ENCODE measurements at regions of chr3 and their contacts with region 1.

Region 1: DNA sequence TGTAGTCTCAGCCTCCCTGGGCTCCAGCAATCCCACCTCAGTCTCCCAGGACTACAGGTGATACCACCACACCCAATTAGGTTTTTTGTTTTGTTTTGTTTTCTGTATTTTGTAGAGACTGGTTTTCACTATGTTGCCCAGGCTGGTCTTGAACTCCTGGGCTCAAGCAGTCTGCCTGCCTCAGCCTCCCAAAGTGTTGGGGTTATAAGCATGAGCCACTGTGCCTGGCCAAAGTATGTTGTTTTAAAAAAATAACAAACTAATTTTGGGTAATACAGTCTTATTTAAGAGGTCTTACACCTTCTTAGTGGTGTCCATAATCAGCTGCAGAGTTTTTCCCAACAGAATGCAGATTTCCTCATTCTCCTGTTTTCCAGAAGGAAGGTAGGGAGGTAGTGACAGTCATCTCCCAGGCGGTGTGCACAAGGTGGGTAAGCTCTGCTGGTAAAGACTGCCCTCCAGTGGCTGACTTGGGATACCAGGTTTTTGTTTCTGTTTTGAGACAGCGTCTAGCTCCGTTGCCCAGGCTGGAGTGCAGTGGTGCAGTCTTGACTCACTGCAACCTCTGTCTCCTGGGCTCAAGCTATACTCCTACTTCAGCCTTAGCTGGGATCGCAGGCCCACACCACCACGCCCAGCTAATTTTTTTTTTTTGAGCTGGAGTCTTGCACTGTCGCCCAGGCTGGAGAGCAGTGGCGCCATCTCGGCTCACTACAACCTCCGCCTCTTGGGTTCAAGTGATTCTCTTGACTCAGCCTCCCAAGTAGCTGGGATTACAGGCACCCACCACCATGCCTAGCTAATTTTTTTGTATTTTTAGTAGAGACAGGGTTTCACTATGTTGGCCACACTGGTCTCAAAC is 58.4 kb downstream of the MAP6D1 start:
- DNase-seq: peak; percentile 63 to 79 (median 68)
- ATAC-seq: peak; percentile 98
- H3K4me3 ChIP-seq: no peak overlapping the region
- H3K27ac ChIP-seq: no peak overlapping the region
- H3K4me1 ChIP-seq: peaks cover 0 to 4% of the 10 kb centered on the region in 2 experiments; a peak in 2 of 5 replicates
- H3K27me3 ChIP-seq: no peaks in the 10 kb centered on the region
- CTCF ChIP-seq: peak; percentile 83 to 85 (median 84)
- EP300 ChIP-seq: no peak
- POLR2A ChIP-seq: no peak
- RAD21 ChIP-seq: peak; percentile 66 to 94; a peak in 3 of 4 replicates

Region 2: GRCh38 chr3:183148056-183148455 is 618.9 kb before region 1 on chr3:
- CTCF ChIA-PET with region 1: no interaction called
- POLR2A ChIA-PET with region 1: no interaction called
- in situ Hi-C with region 1: loop called (anchors 25 kb)
- intact Hi-C with region 1: no loop called
- DNase-seq: no peak
- ATAC-seq: no peak
- H3K4me3 ChIP-seq: no peak overlapping the region
- H3K27ac ChIP-seq: no peak overlapping the region
- H3K4me1 ChIP-seq: no peaks in the 10 kb centered on the region; a peak in 1 of 5 replicates
- H3K27me3 ChIP-seq: peaks cover 16 to 39% of the 10 kb centered on the region in 2 experiments
- CTCF ChIP-seq: no peak
- EP300 ChIP-seq: no peak
- POLR2A ChIP-seq: no peak
- RAD21 ChIP-seq: no peak

Region 3: DNA sequence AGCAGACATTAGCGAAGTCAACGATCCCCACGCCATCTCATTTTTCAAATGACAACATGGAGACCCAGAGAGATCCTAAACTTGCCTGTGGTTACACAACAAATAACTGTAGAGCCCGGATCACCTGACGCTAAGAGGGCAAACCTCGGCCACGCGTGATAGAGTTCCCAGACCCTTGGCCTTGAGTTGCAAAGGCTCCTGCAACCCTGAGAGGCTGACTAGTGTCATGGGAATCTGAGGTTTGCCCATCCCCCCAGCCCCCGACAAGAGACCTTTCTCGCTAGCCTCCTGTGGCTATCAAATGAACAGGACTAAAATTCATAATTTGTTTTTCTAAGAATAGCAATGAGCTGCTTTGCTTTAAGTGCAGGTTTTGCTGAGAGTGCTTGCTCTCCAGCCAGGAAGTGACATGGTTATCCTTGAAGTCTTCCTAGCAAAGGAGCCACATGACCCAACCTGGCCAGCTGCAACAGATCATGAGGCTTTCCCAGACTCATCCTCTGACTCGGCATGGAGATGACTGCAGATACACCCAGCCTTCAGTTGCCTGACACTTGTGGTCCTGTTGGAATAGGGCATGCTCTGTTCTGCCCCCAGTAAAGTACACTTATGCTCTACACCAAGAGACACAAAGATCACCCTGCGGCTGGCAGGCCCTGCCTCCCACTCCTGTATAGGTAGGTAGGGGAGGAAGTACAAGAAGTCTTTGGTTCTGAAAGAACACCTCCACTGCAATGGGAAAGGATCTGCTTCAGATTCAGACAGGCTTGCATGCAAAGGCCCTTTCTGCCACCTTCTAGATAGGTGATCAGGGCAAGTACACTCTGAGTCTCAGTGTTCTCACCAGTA is 374.6 kb before region 1 on chr3:
- CTCF ChIA-PET with region 1: no interaction called
- POLR2A ChIA-PET with region 1: no interaction called
- in situ Hi-C with region 1: no loop called
- intact Hi-C with region 1: loop called (anchors 5 kb)
- DNase-seq: no peak
- ATAC-seq: peak; percentile 46; the same call in 2 of the 3 replicates
- H3K4me3 ChIP-seq: no peak overlapping the region
- H3K27ac ChIP-seq: no peak overlapping the region
- H3K4me1 ChIP-seq: peaks cover 0 to 14% of the 10 kb centered on the region in 2 experiments; a peak in 2 of 5 replicates
- H3K27me3 ChIP-seq: no peaks in the 10 kb centered on the region
- CTCF ChIP-seq: no peak
- EP300 ChIP-seq: no peak
- POLR2A ChIP-seq: no peak
- RAD21 ChIP-seq: no peak

Region 4: DNA sequence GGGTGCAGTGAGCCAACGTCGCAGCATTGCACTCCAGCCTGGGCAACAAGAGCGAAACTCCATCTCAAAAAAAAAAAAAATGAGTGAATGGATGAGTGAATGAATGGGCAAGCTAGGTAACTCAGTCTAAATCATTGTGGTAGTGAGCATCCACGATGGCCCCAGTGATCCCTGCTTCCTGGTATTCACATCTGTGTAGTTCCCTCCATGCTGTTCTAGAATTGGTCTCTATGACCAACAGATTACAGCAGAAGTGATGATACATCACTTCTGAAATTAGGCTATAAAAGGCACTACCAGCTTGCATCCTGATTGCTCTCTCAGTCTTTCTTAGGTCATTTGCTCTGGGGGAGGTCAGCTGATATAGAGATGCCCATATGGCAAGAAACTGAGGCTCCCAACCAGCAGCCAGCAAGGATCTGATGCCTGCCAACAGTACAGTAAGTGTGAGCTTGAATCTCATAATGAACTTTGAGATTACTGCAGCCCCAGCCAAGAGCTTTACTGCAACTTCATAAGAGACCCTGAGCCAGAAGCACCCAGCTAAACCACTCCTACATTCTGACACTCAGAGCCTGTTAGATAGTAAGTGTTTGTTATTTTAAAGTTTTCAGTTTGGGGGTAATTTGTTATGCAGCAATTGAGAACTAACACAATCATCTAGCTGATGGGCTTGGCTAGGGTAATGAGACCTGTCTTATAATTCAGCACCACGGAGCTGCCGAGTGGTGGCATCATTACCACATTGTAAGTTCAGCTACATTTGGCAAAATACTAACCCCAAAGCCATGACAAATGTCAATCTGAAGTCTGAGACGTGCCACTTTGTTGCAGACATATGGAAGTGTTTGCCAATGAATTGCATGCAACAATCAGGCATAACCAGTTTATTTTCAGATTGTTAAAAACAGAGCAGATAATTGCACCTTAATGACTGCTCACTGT is 264.5 kb before region 1 on chr3:
- CTCF ChIA-PET with region 1: interaction called, 8 read pairs
- POLR2A ChIA-PET with region 1: no interaction called
- in situ Hi-C with region 1: no loop called
- intact Hi-C with region 1: loop called (anchors 2 kb)
- DNase-seq: no peak
- ATAC-seq: peak; percentile 54
- H3K4me3 ChIP-seq: no peak overlapping the region
- H3K27ac ChIP-seq: no peak overlapping the region
- H3K4me1 ChIP-seq: peaks cover 0 to 8% of the 10 kb centered on the region in 2 experiments; a peak in 3 of 5 replicates
- H3K27me3 ChIP-seq: no peaks in the 10 kb centered on the region
- CTCF ChIP-seq: peak; percentile 14 to 48 (median 21); a peak in 2 of 6 replicates
- EP300 ChIP-seq: no peak
- POLR2A ChIP-seq: no peak
- RAD21 ChIP-seq: peak; percentile 21 to 39; a peak in 3 of 4 replicates

Region 5: GRCh38 chr3:183697610-183698317 is 69.2 kb before region 1 on chr3 and contains the start of gene YEATS2:
- CTCF ChIA-PET with region 1: no interaction called
- POLR2A ChIA-PET with region 1: no interaction called
- in situ Hi-C with region 1: no loop called
- intact Hi-C with region 1: no loop called
- DNase-seq: peak; percentile 79 to 95 (median 94)
- ATAC-seq: peak; percentile 89
- H3K4me3 ChIP-seq: peak within 1 kb of the TSS; percentile 99
- H3K27ac ChIP-seq: peak within 1 kb of the TSS; percentile 87
- H3K4me1 ChIP-seq: peaks cover 5 to 17% of the 10 kb centered on the region in 2 experiments; a peak in 3 of 5 replicates
- H3K27me3 ChIP-seq: no peaks in the 10 kb centered on the region
- CTCF ChIP-seq: no peak
- EP300 ChIP-seq: no peak
- POLR2A ChIP-seq: peak; percentile 74
- RAD21 ChIP-seq: peak in 1 of 2 experiments; percentile 5; a peak in 1 of 4 replicates
- polyA plus RNA-seq, gene YEATS2: 1.8 to 2.1 TPM

Region 6: GRCh38 chr3:183754052-183754451 is 12.9 kb before region 1 on chr3:
- CTCF ChIA-PET with region 1: no interaction called
- POLR2A ChIA-PET with region 1: no interaction called
- in situ Hi-C with region 1: no loop called
- intact Hi-C with region 1: no loop called
- DNase-seq: no peak
- ATAC-seq: no peak
- H3K4me3 ChIP-seq: no peak overlapping the region
- H3K27ac ChIP-seq: no peak overlapping the region
- H3K4me1 ChIP-seq: no peaks in the 10 kb centered on the region
- H3K27me3 ChIP-seq: no peaks in the 10 kb centered on the region
- CTCF ChIP-seq: no peak
- EP300 ChIP-seq: no peak
- POLR2A ChIP-seq: no peak
- RAD21 ChIP-seq: no peak

Region 7: GRCh38 chr3:183779896-183780465 is 13.0 kb after region 1 on chr3:
- CTCF ChIA-PET with region 1: no interaction called
- POLR2A ChIA-PET with region 1: no interaction called
- in situ Hi-C with region 1: no loop called
- intact Hi-C with region 1: no loop called
- DNase-seq: no peak
- ATAC-seq: no peak
- H3K4me3 ChIP-seq: no peak overlapping the region
- H3K27ac ChIP-seq: no peak overlapping the region
- H3K4me1 ChIP-seq: no peaks in the 10 kb centered on the region; a peak in 1 of 5 replicates
- H3K27me3 ChIP-seq: no peaks in the 10 kb centered on the region
- CTCF ChIP-seq: no peak
- EP300 ChIP-seq: no peak
- POLR2A ChIP-seq: no peak
- RAD21 ChIP-seq: no peak